ENCODE measurements at regions of chr3 and their contacts with region 1.

Region 1: DNA sequence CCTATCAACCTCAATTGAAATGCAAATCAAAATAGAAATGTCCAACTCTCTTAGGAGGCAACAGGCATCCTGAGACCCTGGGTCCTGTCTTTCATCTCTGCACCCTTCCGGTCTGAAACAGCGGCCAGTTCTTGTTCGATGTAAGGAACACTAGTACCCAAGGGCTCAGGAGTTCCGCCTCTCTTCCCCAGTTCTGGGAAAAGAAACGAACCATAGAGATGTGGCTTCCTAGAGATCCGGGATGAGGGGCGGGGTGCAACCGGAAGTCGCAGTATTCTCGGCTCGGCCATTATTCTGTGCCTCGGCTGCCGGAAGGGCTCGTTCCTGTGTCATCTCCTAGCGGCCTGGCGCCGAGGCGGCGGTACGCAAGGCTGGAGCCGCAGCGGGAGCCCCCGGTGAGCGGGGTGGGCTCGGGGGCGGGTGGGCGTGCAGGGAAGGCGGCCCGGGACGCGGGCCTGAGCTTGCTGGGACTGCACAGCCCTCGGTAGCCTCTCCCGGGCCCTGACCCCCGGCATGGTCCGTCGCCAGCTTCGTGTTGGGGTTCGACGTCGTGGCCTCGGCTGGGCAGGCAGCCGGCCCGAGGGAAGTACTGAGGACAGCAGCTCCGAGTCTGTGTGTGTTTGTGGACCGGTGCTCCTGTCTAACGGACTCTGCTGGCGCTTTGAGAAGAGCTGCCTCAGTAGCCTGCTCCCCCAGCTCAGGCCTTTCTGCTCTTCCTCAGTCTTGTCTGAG is at the start of gene ZNF197:
- DNase-seq: peak; percentile 86 to 90
- H3K4me3 ChIP-seq: peak within 1 kb of the TSS; percentile 86 to 98
- H3K27ac ChIP-seq: peak within 1 kb of the TSS; percentile 91 to 93
- H3K4me1 ChIP-seq: peaks cover 0 to 13% (median 10%) of the 10 kb centered on the region in 4 donors
- H3K27me3 ChIP-seq: no peaks in the 10 kb centered on the region
- CTCF ChIP-seq: peak in 1 of 2 experiments; percentile 8

Region 2: DNA sequence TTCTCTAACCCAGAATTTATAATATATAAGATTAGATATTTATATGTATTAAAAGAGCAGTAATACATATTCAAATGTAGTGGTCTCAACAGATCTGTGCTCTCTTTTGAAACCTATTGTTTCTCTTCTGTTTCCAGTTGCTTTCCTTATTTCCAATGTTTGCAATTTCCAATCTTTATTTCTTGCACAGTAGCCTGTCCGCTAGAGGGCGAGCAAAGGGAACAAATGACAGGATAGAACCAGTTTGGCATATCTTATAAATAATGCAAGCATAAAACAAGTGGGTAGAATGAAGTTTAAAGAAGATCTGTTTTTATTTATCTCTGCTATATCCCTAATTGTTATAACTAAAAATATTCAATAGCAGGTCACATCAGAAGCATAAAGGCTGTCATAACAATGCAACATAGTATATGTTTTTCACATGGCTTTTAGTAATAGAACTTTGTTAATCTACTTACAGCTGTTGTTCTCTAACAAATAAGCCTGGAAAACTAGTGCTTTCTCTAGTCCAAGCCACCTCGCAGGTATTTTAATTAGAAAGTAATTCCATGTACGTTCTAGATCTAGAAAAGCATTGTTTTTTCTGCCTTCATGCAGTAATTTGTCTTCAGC is 301.5 kb before region 1 on chr3:
- intact Hi-C with region 1: loop called (anchors 10 kb)
- DNase-seq: peak; percentile 71 to 86
- H3K4me3 ChIP-seq: no peak overlapping the region
- H3K27ac ChIP-seq: no peak overlapping the region
- H3K4me1 ChIP-seq: no peaks in the 10 kb centered on the region
- H3K27me3 ChIP-seq: peaks cover 0 to 3% of the 10 kb centered on the region in 2 donors
- CTCF ChIP-seq: peak; percentile 75 to 76

Region 3: DNA sequence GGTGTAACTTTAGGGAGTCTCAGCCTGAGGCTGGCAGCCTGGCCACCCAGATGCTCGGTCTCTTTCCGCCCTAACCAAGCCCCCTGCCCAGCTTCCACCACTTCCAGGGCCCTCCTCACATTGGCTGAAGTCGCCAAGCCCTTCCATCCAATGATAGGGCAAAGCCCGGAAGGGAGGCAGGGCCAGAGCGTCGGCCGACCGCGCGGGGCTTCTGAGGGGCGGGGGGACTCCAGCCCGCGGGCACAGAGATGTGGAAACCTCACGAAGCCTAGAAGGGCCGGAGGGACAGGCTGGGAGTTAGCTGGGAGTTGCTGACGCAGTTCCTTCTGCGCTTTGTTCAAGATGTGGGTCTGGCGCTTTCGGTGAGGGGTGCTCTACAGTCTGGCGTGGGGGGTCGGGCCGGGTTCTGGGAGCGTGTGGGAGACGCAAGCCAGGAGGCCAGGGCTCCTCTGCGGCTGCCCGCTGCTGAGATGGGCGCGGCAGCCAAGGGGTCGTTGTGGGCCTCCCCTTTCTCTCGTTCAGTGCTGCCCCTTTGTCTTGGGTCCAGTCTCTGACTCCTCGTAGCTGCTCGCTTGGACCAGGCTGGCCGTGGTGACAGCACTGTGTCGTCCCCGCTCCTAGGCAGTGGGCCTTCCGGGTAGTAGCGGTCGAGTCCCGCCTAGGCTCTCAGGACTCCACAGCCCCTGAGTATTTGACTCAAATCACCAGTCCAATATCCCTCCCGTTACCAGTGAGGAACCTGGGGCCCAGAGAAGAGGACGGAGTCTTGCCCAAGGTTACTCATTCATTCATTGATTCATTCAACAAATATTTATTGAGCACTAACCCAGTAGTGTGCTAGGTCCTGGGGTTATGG is 40.0 kb before region 1 on chr3 and contains the start of gene ZNF660:
- intact Hi-C with region 1: loop called (anchors 5 kb)
- DNase-seq: peak; percentile 52 to 80
- H3K4me3 ChIP-seq: peak within 1 kb of the TSS; percentile 69 to 73
- H3K27ac ChIP-seq: peak within 1 kb of the TSS; percentile 74 to 83
- H3K4me1 ChIP-seq: peaks cover 0 to 20% (median 14%) of the 10 kb centered on the region in 4 donors
- H3K27me3 ChIP-seq: no peaks in the 10 kb centered on the region
- CTCF ChIP-seq: no peak

Measured in tibial artery (tissue), 4 donors.